GM12878 (cell line): ENCODE measurements at regions of chr2 and their contacts with region 1.

Region 1: DNA sequence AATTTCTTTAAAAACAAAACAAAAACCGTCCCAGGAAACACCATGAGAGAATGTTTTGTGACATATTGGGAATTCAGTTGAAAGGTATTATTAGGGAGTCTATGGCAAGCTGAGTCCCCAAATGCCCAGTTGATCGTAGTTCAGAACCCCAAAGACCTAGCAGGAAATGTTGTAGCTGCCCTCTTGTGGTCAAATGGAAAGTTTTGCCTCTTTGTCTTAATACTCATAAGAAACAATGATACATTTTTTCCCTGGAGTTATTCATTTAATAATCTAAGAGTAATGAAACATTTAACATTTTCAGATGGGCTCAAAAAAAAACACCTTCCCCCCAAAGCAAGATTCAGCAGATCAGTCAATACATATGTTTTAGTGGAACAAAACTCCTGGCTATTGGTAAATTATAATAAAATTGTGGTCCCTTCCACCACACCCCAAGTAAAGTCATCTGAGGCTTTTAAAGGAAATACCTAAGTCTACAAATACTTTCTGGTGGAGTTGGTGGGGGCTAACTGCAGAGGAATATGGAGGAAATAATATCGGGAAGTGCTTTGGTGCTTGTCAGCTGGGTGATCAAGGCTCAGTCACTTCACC is 37.8 kb upstream of the EFEMP1 start:
- DNase-seq: no peak
- ATAC-seq: peak; percentile 82
- H3K4me3 ChIP-seq: no peak overlapping the region
- H3K27ac ChIP-seq: no peak overlapping the region
- H3K4me1 ChIP-seq: no peaks in the 10 kb centered on the region
- H3K27me3 ChIP-seq: no peaks in the 10 kb centered on the region
- CTCF ChIP-seq: peak; percentile 46 to 54 (median 47)
- EP300 ChIP-seq: no peak
- POLR2A ChIP-seq: no peak
- RAD21 ChIP-seq: peak; percentile 51

Region 2: GRCh38 chr2:55732854-55733253 is 228.6 kb before region 1 on chr2:
- CTCF ChIA-PET with region 1: interaction called, 4 read pairs
- POLR2A ChIA-PET with region 1: no interaction called
- RAD21 ChIA-PET with region 1: no interaction called
- SMC1A ChIA-PET with region 1: no interaction called
- in situ Hi-C with region 1: loop called (anchors 5 kb)
- intact Hi-C with region 1: no loop called
- DNase-seq: no peak
- ATAC-seq: no peak
- H3K4me3 ChIP-seq: no peak overlapping the region
- H3K27ac ChIP-seq: no peak overlapping the region
- H3K4me1 ChIP-seq: no peaks in the 10 kb centered on the region
- H3K27me3 ChIP-seq: no peaks in the 10 kb centered on the region
- CTCF ChIP-seq: no peak
- EP300 ChIP-seq: no peak
- POLR2A ChIP-seq: no peak
- RAD21 ChIP-seq: no peak

Region 3: GRCh38 chr2:55771612-55772011 is 189.8 kb before region 1 on chr2:
- CTCF ChIA-PET with region 1: interaction called, 61 read pairs
- POLR2A ChIA-PET with region 1: no interaction called
- RAD21 ChIA-PET with region 1: interaction called, 28 read pairs
- SMC1A ChIA-PET with region 1: interaction called, 45 read pairs
- in situ Hi-C with region 1: no loop called
- intact Hi-C with region 1: loop called (anchors 1 kb)
- DNase-seq: no peak
- ATAC-seq: no peak
- H3K4me3 ChIP-seq: no peak overlapping the region
- H3K27ac ChIP-seq: no peak overlapping the region
- H3K4me1 ChIP-seq: no peaks in the 10 kb centered on the region
- H3K27me3 ChIP-seq: no peaks in the 10 kb centered on the region; a peak in 1 of 4 replicates
- CTCF ChIP-seq: peak in 2 of 3 experiments; percentile 21 to 31; a peak in 3 of 6 replicates
- EP300 ChIP-seq: no peak
- POLR2A ChIP-seq: no peak
- RAD21 ChIP-seq: peak; percentile 42

Region 4: DNA sequence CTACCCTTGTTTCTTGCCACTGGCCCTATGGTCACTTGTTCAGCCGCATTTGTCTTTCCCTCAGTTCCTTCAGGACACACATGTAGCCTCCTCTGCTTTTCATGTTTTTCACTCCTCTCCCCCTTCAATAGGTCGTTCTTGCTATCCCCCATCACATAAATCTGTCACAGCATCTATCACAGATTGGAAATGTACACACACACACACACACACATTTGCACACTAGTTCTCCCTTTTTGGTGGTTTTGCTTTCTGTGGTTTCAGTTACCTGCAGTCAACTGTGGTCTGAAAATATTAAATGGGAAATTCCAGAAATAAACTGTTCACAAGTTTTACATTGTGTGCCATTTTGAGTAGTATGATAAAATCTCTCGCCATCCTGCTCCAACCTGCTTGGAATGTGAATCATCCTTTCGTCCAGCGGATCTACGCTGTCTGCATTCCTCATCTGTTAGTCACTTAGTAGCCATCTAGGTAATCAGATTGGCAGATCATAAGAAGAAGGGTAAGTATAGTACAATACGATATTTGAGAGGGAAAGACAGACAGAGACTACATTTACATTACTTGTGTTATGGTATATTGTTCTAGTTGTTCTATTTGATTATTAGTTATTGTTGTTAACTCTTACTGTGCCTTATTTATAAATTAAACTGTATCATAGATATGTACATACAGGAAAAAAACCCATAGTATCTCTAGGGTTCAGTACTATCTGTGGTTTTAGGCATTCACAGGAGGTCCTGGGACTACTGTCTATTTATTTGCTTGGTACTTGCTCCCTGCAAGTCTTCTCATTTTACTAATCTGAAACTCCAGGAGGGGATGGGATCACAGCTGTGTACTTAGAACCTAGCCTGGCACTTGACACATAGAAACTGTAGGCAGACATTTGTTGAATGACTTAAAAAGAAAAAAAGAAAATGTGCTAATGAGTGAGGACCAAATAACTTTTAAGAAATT is 181.7 kb before region 1 on chr2:
- CTCF ChIA-PET with region 1: interaction called, 12 read pairs
- POLR2A ChIA-PET with region 1: no interaction called
- RAD21 ChIA-PET with region 1: interaction called, 3 read pairs
- SMC1A ChIA-PET with region 1: interaction called, 3 read pairs
- in situ Hi-C with region 1: no loop called
- intact Hi-C with region 1: no loop called
- DNase-seq: no peak
- ATAC-seq: peak; percentile 40
- H3K4me3 ChIP-seq: no peak overlapping the region
- H3K27ac ChIP-seq: no peak overlapping the region
- H3K4me1 ChIP-seq: no peaks in the 10 kb centered on the region
- H3K27me3 ChIP-seq: no peaks in the 10 kb centered on the region
- CTCF ChIP-seq: no peak
- EP300 ChIP-seq: no peak
- POLR2A ChIP-seq: no peak
- RAD21 ChIP-seq: no peak

Region 5: DNA sequence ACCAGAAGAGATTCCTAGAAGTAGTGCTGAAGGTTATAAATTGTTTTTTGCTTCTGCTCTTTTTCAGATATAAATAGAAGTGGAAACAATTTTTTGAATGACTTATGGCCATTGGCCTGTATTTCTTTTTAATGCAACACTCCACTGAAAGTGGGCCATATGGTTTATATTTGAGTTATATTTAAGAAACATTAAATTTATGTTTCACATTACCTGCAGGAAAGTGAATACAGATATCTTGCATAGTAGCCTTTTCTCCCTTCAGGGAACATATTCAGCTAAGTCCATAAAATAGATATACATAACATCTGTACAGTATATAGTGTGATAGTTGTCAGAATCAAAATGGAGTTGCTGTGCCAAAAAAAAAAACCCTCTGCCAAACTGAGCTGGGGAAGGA is 15.3 kb after region 1 on chr2:
- CTCF ChIA-PET with region 1: interaction called, 35 read pairs
- POLR2A ChIA-PET with region 1: no interaction called
- RAD21 ChIA-PET with region 1: no interaction called
- SMC1A ChIA-PET with region 1: interaction called, 6 read pairs
- in situ Hi-C with region 1: no loop called
- intact Hi-C with region 1: no loop called
- DNase-seq: no peak
- ATAC-seq: no peak
- H3K4me3 ChIP-seq: no peak overlapping the region
- H3K27ac ChIP-seq: no peak overlapping the region
- H3K4me1 ChIP-seq: no peaks in the 10 kb centered on the region
- H3K27me3 ChIP-seq: no peaks in the 10 kb centered on the region
- CTCF ChIP-seq: no peak
- EP300 ChIP-seq: no peak
- POLR2A ChIP-seq: no peak
- RAD21 ChIP-seq: no peak

Region 6: GRCh38 chr2:56483081-56483480 is 521.7 kb after region 1 on chr2:
- CTCF ChIA-PET with region 1: no interaction called
- POLR2A ChIA-PET with region 1: no interaction called
- RAD21 ChIA-PET with region 1: no interaction called
- SMC1A ChIA-PET with region 1: no interaction called
- in situ Hi-C with region 1: no loop called
- intact Hi-C with region 1: no loop called
- DNase-seq: no peak
- ATAC-seq: no peak
- H3K4me3 ChIP-seq: no peak overlapping the region
- H3K27ac ChIP-seq: no peak overlapping the region
- H3K4me1 ChIP-seq: no peaks in the 10 kb centered on the region
- H3K27me3 ChIP-seq: no peaks in the 10 kb centered on the region
- CTCF ChIP-seq: no peak
- EP300 ChIP-seq: no peak
- POLR2A ChIP-seq: no peak
- RAD21 ChIP-seq: no peak